ENCODE measurements at regions of chr6 and their contacts with region 1.

Region 1: DNA sequence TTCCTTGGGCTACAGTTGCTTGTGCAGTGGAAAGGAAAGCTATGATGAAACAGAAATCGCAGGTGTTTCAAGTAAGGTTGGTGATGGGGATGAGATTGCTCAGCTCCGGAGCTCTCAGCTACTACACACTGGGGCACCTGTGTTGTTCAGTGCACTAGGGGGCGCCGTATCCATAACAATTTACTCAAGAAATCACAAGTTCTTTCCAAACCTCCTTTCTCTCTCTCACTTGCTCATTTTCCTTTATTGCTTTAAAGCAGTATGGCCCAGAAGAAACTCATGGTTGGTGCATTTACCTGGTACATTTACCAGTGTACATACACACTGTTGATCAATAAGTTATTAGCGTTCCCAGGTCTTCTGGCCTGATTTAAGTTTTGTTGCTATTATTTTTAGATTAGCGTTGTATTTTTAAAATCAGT is 235.2 kb upstream of the TAB2 start:
- DNase-seq: peak; percentile 95
- ATAC-seq: peak; percentile 90
- H3K4me3 Mint-ChIP-seq: peak overlapping the region; percentile 15
- H3K27ac Mint-ChIP-seq: peak overlapping the region; percentile 5
- H3K4me1 Mint-ChIP-seq: peaks cover 73% of the 10 kb centered on the region
- H3K27me3 Mint-ChIP-seq: no peaks in the 10 kb centered on the region

Region 2: GRCh38 chr6:149028767-149029405 is 53.4 kb before region 1 on chr6:
- CTCF ChIA-PET with region 1: interaction called, 12 read pairs
- POLR2A ChIA-PET with region 1: interaction called, 5 read pairs
- DNase-seq: peak; percentile 87
- ATAC-seq: peak; percentile 62
- H3K4me3 Mint-ChIP-seq: no peak overlapping the region
- H3K27ac Mint-ChIP-seq: no peak overlapping the region
- H3K4me1 Mint-ChIP-seq: peaks cover 53% of the 10 kb centered on the region
- H3K27me3 Mint-ChIP-seq: no peaks in the 10 kb centered on the region

Region 3: GRCh38 chr6:149043476-149044130 is 38.7 kb before region 1 on chr6:
- CTCF ChIA-PET with region 1: interaction called, 10 read pairs
- POLR2A ChIA-PET with region 1: interaction called, 3 read pairs
- DNase-seq: peak; percentile 52
- ATAC-seq: no peak
- H3K4me3 Mint-ChIP-seq: no peak overlapping the region
- H3K27ac Mint-ChIP-seq: no peak overlapping the region
- H3K4me1 Mint-ChIP-seq: peaks cover 52% of the 10 kb centered on the region
- H3K27me3 Mint-ChIP-seq: no peaks in the 10 kb centered on the region

Region 4: DNA sequence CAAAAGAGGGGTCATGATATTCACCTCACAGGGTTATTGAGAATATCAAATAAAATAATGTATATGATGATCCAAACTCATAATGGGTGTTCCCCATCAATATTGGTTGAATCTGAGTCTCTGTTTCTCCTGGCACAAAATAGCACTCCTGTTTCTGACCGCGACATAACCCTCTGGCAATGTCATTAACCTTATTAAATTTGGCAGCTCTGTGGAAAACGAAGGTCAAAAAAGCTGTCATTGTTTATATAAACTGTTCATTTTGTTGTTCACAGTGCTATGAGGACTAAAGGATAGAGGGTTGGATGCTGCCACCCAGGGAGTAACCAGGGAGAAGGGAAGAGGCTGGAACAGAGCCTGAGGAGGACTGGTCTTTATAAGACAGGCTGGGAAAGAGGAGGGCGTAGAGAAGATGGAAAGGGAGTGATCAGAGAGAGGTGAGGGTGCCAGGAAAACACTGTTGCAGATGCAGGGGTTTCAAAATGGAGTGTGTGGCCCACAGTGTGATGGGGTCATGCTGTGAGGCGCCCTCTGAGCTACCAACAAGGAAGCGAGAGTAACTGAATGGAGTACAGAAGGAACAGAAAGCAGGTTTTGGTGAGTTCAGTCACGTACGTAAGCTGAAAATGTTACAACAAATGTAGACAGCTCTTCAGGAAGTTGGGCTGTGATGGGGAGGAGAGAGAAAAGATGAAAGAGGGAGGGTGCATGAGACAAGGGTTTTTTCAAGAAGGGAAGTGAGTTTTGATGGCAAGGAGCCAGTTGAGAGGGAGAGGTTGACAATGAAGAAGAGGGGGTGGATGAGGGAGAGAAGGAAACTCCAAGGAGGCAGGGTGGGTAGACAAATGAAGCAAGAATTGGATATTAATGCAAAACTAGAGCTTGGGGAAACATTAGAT is 16.4 kb before region 1 on chr6:
- CTCF ChIA-PET with region 1: interaction called, 23 read pairs
- POLR2A ChIA-PET with region 1: interaction called, 4 read pairs
- DNase-seq: peak; percentile 66
- ATAC-seq: peak; percentile 92
- H3K4me3 Mint-ChIP-seq: peak overlapping the region; percentile 6
- H3K27ac Mint-ChIP-seq: peak overlapping the region; percentile 90
- H3K4me1 Mint-ChIP-seq: peaks cover 40% of the 10 kb centered on the region
- H3K27me3 Mint-ChIP-seq: no peaks in the 10 kb centered on the region

Region 5: DNA sequence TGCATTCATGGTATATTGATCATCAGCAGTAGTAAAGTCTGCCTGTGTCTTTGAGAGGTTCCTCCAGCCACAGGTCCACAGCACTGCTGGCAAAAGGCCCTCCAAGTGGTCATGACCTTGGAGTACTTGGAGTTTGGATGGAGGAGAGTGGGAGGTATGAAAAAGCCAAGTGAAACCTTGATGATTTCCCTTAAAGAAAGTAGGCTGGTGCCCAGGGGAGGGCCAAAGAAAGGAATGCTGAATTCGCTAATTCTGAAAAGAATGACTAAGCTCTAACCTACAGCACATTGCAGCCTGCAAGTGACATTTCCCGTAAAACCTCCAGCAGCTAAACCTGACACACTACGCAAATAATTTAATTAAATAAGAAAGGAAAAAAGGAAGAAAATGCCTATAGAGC is 11.9 kb after region 1 on chr6:
- CTCF ChIA-PET with region 1: interaction called, 21 read pairs
- POLR2A ChIA-PET with region 1: interaction called, 24 read pairs
- DNase-seq: no peak
- ATAC-seq: no peak
- H3K4me3 Mint-ChIP-seq: peak overlapping the region; percentile 54
- H3K27ac Mint-ChIP-seq: peak overlapping the region; percentile 89
- H3K4me1 Mint-ChIP-seq: peaks cover 79% of the 10 kb centered on the region
- H3K27me3 Mint-ChIP-seq: no peaks in the 10 kb centered on the region

Region 6: GRCh38 chr6:149129371-149130077 is 47.2 kb after region 1 on chr6:
- CTCF ChIA-PET with region 1: interaction called, 10 read pairs
- POLR2A ChIA-PET with region 1: no interaction called
- DNase-seq: peak; percentile 20
- ATAC-seq: no peak
- H3K4me3 Mint-ChIP-seq: no peak overlapping the region
- H3K27ac Mint-ChIP-seq: peak overlapping the region; percentile 83
- H3K4me1 Mint-ChIP-seq: peaks cover 61% of the 10 kb centered on the region
- H3K27me3 Mint-ChIP-seq: no peaks in the 10 kb centered on the region

Region 7: GRCh38 chr6:149334682-149335160 is 252.4 kb after region 1 on chr6:
- CTCF ChIA-PET with region 1: interaction called, 21 read pairs
- POLR2A ChIA-PET with region 1: interaction called, 3 read pairs
- DNase-seq: no peak
- ATAC-seq: no peak
- H3K4me3 Mint-ChIP-seq: no peak overlapping the region
- H3K27ac Mint-ChIP-seq: peak overlapping the region; percentile 43
- H3K4me1 Mint-ChIP-seq: peaks cover 82% of the 10 kb centered on the region
- H3K27me3 Mint-ChIP-seq: no peaks in the 10 kb centered on the region

Measured in activated CD8-positive, alpha-beta T cell treated with anti-CD3 and anti-CD28 coated beads, Interleukin-2, amount 10 ng/mL, durations not matched to agents 7 days and 5 days (primary cell).